ENCODE measurements at regions of chr20 and their contacts with region 1.

Region 1: DNA sequence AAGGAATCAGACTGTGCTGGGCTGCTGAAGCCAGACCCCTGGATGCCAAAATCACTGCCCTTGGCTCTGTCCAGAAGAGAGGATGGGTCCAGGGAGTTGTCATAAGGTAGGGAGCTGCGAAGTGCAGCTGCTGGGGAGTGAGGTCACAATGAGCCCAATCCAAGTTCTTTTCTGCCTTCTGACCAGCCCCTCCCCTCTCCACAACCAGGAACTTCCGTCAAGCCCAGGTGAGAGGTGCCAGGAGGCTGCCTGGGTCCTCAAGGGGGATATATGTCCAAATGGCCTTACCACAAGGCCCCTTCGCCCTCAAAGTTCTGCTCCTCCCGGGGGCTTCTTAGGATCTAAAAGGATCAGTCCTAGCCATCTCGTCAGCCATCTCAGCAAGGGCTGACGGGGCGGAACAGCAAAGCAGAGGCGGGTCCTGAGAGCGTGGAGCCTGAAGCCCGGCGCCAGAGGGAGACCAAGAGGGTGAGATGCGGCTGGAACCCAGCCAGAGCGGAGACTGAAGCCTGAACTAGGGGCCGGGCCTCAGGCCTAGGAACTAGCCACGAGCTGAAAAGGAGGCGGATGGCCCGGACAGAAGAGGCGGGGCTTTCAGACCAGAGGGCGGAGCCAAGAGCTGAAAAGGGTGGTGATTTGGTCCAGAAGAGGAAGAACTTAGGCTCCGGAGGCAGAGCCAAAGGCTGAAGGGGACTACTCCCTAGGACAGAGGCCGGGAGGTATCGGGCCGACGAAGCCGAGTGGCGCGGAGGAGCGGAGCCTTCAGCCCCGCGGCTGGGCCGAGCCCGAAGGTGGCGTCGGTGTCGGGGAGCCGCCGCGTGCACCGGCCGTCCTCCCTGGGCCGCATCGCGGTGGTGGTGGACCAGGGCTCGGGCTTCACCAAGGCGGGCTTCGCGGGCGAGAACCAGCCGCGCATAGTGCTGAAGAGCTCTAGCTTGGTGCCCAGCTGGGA is at the start of gene ACTL10:
- DNase-seq: peak; percentile 99 to 100 (median 99)
- ATAC-seq: peak; percentile 80 to 83
- H3K4me3 ChIP-seq: peak within 1 kb of the TSS; percentile 19
- H3K27ac ChIP-seq: peak within 1 kb of the TSS; percentile 80
- H3K4me1 ChIP-seq: no peaks in the 10 kb centered on the region
- H3K27me3 ChIP-seq: no peaks in the 10 kb centered on the region
- total RNA-seq, gene ACTL10: 0.29 to 0.71 (median 0.32) TPM

Region 2: DNA sequence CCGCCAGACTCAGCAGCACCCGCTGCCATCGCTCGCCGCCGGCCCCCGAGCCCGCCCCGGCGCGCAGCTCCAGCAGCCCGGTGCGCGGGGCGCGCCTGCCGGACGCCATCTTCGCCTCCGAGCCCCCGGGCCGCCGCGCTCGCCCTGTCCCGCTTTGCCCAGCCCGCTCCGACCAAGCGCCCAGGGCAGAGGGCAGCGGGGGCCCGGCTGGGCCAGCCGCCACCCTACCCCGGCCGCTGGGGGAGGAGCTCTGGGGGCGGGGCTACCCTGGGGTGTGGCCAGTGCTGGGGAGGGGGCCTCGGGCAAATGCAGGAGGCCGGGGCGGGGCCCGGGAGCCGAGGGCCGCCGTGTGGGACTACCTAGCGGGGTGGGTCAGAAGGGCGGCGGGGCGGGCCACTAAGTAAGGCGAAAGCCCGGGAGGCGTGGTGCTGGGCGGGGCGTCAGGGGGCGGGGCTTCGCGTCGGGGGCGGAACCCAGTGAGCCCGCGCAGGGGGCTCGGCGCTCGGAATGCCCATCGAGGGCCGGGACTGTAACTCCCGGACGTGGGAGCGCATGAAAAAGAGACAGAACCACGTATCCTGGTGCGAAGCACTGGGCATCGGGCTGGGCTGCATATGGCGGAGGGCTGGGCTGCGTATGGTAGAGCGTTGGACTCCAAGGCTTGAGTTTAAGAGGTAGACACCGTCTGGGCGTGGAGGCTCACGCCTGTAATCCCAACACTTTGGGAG is 222.9 kb before region 1 on chr20 and contains the start of gene SNTA1:
- intact Hi-C with region 1: loop called in 1 of 4 experiments (anchors 10 kb)
- DNase-seq: peak; percentile 93 to 98 (median 98)
- ATAC-seq: peak; percentile 93 to 96
- H3K4me3 ChIP-seq: peak within 1 kb of the TSS; percentile 83
- H3K27ac ChIP-seq: peak within 1 kb of the TSS; percentile 71
- H3K4me1 ChIP-seq: peaks cover 1% of the 10 kb centered on the region
- H3K27me3 ChIP-seq: no peaks in the 10 kb centered on the region
- total RNA-seq, gene SNTA1: 160 to 207 (median 170) TPM

Region 3: GRCh38 chr20:33489495-33490022 is 177.0 kb before region 1 on chr20:
- intact Hi-C with region 1: no loop called
- DNase-seq: peak; percentile 99 to 100 (median 100)
- ATAC-seq: peak; percentile 99
- H3K4me3 ChIP-seq: peak overlapping the region; percentile 72
- H3K27ac ChIP-seq: peak overlapping the region; percentile 83
- H3K4me1 ChIP-seq: no peaks in the 10 kb centered on the region
- H3K27me3 ChIP-seq: no peaks in the 10 kb centered on the region

Region 4: GRCh38 chr20:33561692-33562601 is 104.6 kb before region 1 on chr20:
- intact Hi-C with region 1: no loop called
- DNase-seq: peak; percentile 77 to 84 (median 78)
- ATAC-seq: peak; percentile 94
- H3K4me3 ChIP-seq: no peak overlapping the region
- H3K27ac ChIP-seq: peak overlapping the region; percentile 36
- H3K4me1 ChIP-seq: no peaks in the 10 kb centered on the region
- H3K27me3 ChIP-seq: no peaks in the 10 kb centered on the region

Measured in right cardiac atrium (tissue), 5 donors.